Right cardiac atrium (tissue), 5 donors: ENCODE measurements at regions of chr13 and their contacts with region 1.

Region 1: GRCh38 chr13:26707122-26708006 is 53.2 kb downstream of the GPR12 start:
- DNase-seq: no peak
- ATAC-seq: peak; percentile 59 to 71
- H3K4me3 ChIP-seq: no peak overlapping the region
- H3K27ac ChIP-seq: no peak overlapping the region
- H3K4me1 ChIP-seq: no peaks in the 10 kb centered on the region
- H3K27me3 ChIP-seq: no peaks in the 10 kb centered on the region

Region 2: GRCh38 chr13:26872525-26873385 is 165.4 kb after region 1 on chr13:
- intact Hi-C with region 1: loop called (anchors 1 to 5 kb)
- DNase-seq: peak; percentile 43 to 79 (median 77)
- ATAC-seq: peak in 1 of 2 donors; percentile 45
- H3K4me3 ChIP-seq: no peak overlapping the region
- H3K27ac ChIP-seq: no peak overlapping the region
- H3K4me1 ChIP-seq: no peaks in the 10 kb centered on the region
- H3K27me3 ChIP-seq: no peaks in the 10 kb centered on the region

Region 3: DNA sequence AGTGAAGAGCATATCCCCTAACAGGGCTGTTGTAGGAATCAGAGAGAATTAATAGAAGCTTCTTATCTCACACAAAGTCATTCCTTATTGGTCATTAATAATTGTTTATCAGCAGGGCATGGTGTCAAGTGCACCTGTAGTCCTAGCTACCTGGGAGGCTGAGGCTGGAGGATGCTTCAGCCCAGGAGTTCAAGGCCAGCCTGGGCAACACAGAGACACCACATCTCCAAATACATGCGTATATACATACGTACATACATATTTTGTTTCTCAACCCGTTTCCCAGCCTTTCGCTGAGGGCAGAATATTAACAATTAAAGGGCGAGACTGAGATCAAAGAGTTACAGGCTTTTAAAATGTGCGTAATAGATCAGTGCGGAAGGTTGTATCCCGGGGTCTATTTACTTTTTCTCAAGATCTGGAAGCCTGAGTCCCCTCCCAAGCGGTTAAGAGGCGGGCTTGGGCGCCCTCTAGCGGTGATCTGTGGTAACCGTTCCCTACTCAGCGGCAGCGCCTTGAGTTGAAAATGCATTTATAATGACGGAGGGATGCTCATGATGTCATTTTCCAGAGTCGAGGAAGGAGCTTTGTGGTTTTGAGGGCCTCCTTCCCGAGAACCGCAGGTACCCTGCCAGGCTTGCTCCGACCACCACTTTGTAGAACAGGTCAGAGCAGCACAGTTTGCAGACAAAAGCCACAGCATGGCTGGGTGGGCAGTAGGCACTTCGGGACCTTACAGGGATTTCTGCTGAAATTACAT is 222.8 kb after region 1 on chr13:
- intact Hi-C with region 1: loop called in 3 of 4 experiments (anchors 2 to 10 kb)
- DNase-seq: peak; percentile 60 to 88 (median 82)
- ATAC-seq: peak; percentile 69 to 81
- H3K4me3 ChIP-seq: no peak overlapping the region
- H3K27ac ChIP-seq: no peak overlapping the region
- H3K4me1 ChIP-seq: no peaks in the 10 kb centered on the region
- H3K27me3 ChIP-seq: no peaks in the 10 kb centered on the region